Dorsolateral prefrontal cortex (tissue), 120 donors: ENCODE measurements at regions of chr12 and their contacts with region 1.

Region 1: GRCh38 chr12:132189378-132190011 is 45.2 kb downstream of the NOC4L start:
- DNase-seq: peak; percentile 32 to 89 (median 76)
- H3K4me3 ChIP-seq: peak overlapping the region; percentile 6 to 80 (median 62)
- H3K27ac ChIP-seq: peak overlapping the region in 38 of 59 donors; percentile 3 to 89 (median 59)
- H3K27me3 ChIP-seq: peaks cover 0 to 40% (median 0%) of the 10 kb centered on the region in 45 donors
- CTCF ChIP-seq: peak in 5 of 56 donors; percentile 4 to 21 (median 19)

Region 2: GRCh38 chr12:132162508-132163031 is 26.9 kb before region 1 on chr12:
- intact Hi-C with region 1: loop called in 1 of 2 experiments (anchors 2 kb)
- DNase-seq: peak in 2 of 10 donors; percentile 27 to 47
- H3K4me3 ChIP-seq: peak overlapping the region in 32 of 59 donors; percentile 5 to 51 (median 26)
- H3K27ac ChIP-seq: peak overlapping the region in 11 of 59 donors; percentile 11 to 64 (median 37)
- H3K27me3 ChIP-seq: peaks cover 0 to 2% (median 0%) of the 10 kb centered on the region in 45 donors
- CTCF ChIP-seq: no peak